HAP-1 (cell line): ENCODE measurements at regions of chr6 and their contacts with region 1.

Region 1: DNA sequence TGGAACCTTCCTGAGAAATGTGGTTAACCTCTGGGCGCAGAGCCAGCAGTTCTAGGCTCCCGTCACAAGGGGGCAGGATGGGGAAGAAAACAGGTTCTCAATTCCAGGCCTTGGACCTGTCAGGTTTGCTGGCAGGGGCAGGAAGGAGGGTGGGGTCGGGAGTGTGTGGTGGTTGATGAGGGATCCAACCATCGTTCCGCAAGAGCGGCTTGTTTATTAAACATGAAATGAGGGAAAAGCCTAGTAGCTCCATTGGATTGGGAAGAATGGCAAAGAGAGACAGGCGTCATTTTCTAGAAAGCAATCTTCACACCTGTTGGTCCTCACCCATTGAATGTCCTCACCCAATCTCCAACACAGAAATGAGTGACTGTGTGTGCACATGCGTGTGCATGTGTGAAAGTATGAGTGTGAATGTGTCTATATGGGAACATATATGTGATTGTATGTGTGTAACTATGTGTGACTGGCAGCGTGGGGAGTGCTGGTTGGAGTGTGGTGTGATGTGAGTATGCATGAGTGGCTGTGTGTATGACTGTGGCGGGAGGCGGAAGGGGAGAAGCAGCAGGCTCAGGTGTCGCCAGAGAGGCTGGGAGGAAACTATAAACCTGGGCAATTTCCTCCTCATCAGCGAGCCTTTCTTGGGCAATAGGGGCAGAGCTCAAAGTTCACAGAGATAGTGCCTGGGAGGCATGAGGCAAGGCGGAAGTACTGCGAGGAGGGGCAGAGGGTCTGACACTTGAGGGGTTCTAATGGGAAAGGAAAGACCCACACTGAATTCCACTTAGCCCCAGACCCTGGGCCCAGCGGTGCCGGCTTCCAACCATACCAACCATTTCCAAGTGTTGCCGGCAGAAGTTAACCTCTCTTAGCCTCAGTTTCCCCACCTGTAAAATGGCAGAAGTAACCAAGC is 29.6 kb downstream of the SRSF3 start:
- DNase-seq: peak; percentile 48 to 90
- H3K4me3 ChIP-seq: no peak overlapping the region
- H3K4me1 ChIP-seq: no peaks in the 10 kb centered on the region
- H3K27me3 ChIP-seq: no peaks in the 10 kb centered on the region

Region 2: DNA sequence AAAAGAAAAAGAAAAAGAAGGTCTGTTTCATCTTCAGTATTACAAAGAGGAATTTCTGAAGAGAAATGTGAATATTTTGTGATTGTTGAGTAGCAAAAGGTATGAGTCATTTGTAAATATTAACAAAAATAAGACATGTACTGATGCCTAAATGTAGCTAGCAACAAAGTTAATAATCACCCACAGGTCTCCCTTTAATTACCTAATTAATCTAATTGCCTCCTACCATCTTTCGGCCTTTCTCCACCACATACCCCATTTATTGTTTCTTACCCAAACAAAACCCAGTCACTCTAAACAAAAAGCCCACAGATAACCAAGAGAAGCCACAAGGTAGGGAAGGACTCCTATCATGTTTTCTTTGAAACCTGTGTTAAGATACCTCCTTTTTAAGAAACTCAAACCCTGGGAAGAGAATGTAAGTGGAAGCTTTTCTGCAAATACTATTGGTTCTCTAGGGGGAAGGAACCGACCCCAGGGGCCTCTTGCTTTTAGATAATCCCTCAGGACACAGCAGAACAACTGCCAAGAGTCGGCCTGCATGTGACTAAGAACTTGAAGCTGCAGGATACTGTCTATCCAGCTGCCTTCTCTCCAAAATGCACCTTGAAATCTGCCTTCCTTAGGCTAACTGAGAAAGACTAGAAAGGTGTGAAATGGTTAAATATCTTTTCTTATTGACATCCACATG is 60.4 kb before region 1 on chr6:
- in situ Hi-C with region 1: no loop called
- DNase-seq: no peak
- H3K4me3 ChIP-seq: no peak overlapping the region
- H3K4me1 ChIP-seq: no peaks in the 10 kb centered on the region; the same call in none of the 2 replicates
- H3K27me3 ChIP-seq: no peaks in the 10 kb centered on the region

Region 3: DNA sequence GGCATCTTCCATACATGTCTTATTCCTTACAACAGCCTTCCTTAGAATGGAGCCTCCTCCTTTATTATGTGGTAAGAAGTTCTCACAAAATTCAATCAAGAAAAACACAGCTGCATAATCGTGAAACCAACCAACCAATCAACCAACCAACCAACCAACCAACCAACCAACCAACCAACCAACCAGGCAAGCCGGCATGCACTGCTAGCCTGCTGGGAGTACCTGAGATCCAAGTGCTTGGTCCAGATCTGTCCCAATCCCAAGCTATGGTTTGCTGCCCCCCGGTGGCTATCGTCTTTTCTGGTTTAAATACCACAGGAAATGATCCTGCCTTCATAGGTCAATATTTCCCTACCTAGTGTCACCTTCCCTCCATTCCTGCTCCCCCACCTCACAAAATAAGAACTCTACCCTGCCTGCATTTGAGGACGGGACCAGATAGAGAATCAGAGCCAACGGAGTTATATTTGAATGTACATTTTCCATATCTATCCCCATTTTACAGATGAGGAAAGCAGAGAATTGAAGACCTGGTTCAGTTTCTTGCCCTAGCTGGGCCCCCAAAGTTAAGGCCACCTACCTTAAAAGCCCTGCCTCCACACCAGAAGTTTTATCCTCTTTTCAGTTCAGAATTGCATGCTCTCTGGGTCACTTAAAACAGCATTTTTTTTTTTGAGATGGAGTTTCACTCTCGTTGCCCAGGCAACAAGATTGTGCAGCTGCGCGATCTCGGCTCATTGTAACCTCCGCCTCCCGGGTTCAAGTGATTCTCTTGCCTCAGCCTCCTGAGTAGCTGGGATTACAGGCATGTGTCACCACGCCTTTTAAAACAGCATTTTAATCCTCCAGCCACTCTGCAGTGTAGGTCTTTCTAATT is 100.9 kb after region 1 on chr6:
- in situ Hi-C with region 1: loop called (anchors 25 kb)
- DNase-seq: peak; percentile 48 to 84
- H3K4me3 ChIP-seq: no peak overlapping the region
- H3K4me1 ChIP-seq: peaks cover 5% of the 10 kb centered on the region
- H3K27me3 ChIP-seq: no peaks in the 10 kb centered on the region

Region 4: DNA sequence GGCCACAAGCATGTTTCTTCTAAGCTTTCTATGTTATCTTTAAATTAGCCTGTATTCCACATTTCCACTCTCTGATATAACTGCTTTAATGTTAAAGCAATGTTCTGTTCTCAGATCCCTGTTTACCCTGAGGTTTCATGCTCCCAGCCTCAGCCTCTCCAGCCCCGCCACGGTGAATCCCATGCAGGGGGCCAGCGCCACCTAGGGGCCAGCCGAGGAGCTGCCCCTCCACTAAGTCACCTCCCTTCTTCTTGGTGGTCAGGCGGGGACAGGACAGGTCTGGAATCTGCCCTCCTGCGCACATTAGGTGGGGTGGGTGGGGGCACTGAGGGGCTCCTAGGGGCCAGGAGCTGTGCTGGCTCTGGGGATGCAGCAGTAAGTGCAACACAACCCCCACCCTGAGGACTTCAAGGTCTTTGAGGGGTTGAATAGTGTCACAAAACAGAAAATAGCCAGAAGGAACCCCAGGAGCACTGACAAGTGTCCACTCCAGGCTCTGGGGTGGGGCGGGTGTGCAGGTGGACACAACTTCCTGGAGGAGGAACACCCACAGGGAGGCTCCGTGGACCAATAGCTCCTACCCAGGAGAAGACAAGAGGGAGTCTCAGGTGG is 135.5 kb after region 1 on chr6:
- in situ Hi-C with region 1: loop called (anchors 10 kb)
- DNase-seq: peak; percentile 53 to 90
- H3K4me3 ChIP-seq: no peak overlapping the region
- H3K4me1 ChIP-seq: no peaks in the 10 kb centered on the region
- H3K27me3 ChIP-seq: no peaks in the 10 kb centered on the region

Region 5: DNA sequence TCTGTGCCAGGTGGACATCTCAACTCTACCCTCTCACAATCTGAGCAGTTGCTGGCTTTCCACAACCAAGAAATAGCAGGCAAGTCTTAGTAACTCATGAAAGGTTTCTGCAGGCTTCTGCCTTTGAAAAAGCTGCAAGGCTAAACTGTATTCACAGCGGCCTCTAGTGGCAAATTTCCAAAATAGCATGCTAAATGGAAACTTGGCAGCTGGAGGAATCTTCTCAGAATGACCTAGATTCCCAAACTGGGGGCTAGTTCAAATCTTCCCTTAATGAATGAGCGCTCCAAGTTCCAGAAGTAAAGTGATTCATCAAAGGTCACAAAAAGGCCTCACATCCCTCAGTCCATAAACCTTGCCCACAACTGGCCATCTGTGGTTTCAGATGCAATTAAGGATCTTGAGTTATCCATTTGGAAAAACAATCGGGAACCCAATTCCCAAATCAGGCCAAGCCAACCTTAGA is 227.4 kb after region 1 on chr6:
- in situ Hi-C with region 1: loop called (anchors 5 kb)
- DNase-seq: peak; percentile 35 to 63
- H3K4me3 ChIP-seq: no peak overlapping the region
- H3K4me1 ChIP-seq: peaks cover 9% of the 10 kb centered on the region
- H3K27me3 ChIP-seq: no peaks in the 10 kb centered on the region

Region 6: DNA sequence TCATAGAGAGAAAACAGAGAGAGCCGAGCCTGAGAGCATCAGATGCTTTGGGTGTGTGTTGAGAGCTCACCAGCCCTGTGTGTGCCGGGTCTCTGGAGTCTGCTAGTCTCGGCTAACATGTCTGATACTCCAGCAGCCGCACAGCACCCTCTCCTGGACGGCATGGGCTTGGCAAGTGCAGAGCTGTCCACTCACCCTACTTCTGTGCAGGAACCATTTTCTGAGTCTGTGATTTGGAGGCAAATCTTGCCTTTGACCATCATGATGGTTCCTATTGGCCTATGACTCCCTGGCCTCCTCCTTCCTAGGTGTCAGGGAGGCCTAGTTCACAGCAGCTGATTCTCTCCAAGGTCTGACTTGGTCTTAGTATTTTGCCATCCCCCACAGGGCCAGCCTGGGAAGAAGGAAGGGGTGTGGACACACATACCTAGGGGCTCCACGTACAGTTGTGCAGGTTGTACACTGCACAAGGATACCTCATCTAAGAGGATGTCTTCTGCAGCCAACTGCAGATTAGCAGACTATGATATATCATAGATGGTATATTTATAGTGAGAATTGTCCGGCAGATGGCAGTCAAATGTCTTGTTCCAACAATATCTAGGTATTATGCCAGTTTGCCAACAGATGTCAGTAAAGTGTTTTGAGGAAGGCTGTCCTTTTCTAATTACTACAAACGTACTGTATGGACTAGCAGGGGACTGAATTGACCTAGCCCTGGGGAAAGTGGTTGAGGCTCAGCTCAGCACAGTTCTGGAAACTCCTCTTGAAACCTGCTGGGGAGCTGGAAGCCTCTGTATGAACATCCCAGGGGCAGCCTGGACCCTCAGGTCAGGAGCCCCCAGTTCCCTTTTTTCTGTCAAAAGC is 394.6 kb after region 1 on chr6:
- in situ Hi-C with region 1: loop called (anchors 25 kb)
- DNase-seq: peak; percentile 89 to 94
- H3K4me3 ChIP-seq: no peak overlapping the region
- H3K4me1 ChIP-seq: peaks cover 6% of the 10 kb centered on the region; the same call in 1 of the 2 replicates
- H3K27me3 ChIP-seq: no peaks in the 10 kb centered on the region

Region 7: GRCh38 chr6:37222125-37222967 is 598.5 kb after region 1 on chr6:
- in situ Hi-C with region 1: loop called (anchors 25 kb)
- DNase-seq: peak; percentile 92 to 95
- H3K4me3 ChIP-seq: peak overlapping the region; percentile 61
- H3K4me1 ChIP-seq: peaks cover 6% of the 10 kb centered on the region; the same call in 1 of the 2 replicates
- H3K27me3 ChIP-seq: no peaks in the 10 kb centered on the region